ENCODE measurements at regions of chr7 and their contacts with region 1.

Region 1: GRCh38 chr7:74656837-74657691 is 454 bp upstream of the GTF2I start:
- DNase-seq: peak; percentile 97
- ATAC-seq: peak; percentile 66
- H3K4me3 ChIP-seq: peak overlapping the region; percentile 71 to 90 (median 88)
- H3K4me3 Mint-ChIP-seq: peak overlapping the region; percentile 93
- H3K27ac ChIP-seq: peak overlapping the region; percentile 60 to 86
- H3K27ac Mint-ChIP-seq: peak overlapping the region; percentile 86
- H3K4me1 ChIP-seq: peaks cover 43 to 47% of the 10 kb centered on the region in 2 donors
- H3K4me1 Mint-ChIP-seq: peaks cover 46% of the 10 kb centered on the region
- H3K27me3 ChIP-seq: no peaks in the 10 kb centered on the region
- H3K27me3 Mint-ChIP-seq: no peaks in the 10 kb centered on the region
- CTCF ChIP-seq: no peak

Region 2: GRCh38 chr7:74023037-74023436 is 634.0 kb before region 1 on chr7:
- CTCF ChIA-PET with region 1: no interaction called
- POLR2A ChIA-PET with region 1: no interaction called
- intact Hi-C with region 1: no loop called
- DNase-seq: no peak
- ATAC-seq: no peak
- H3K4me3 ChIP-seq: no peak overlapping the region
- H3K4me3 Mint-ChIP-seq: no peak overlapping the region
- H3K27ac ChIP-seq: no peak overlapping the region
- H3K27ac Mint-ChIP-seq: no peak overlapping the region
- H3K4me1 ChIP-seq: peaks cover 3 to 5% of the 10 kb centered on the region in 2 donors
- H3K4me1 Mint-ChIP-seq: peaks cover 3% of the 10 kb centered on the region
- H3K27me3 ChIP-seq: peaks cover 0 to 32% (median 10%) of the 10 kb centered on the region in 4 experiments
- H3K27me3 Mint-ChIP-seq: peaks cover 28% of the 10 kb centered on the region
- CTCF ChIP-seq: no peak

Region 3: GRCh38 chr7:74554178-74554577 is 102.9 kb before region 1 on chr7:
- CTCF ChIA-PET with region 1: no interaction called
- POLR2A ChIA-PET with region 1: no interaction called
- intact Hi-C with region 1: no loop called
- DNase-seq: no peak
- ATAC-seq: no peak
- H3K4me3 ChIP-seq: no peak overlapping the region
- H3K4me3 Mint-ChIP-seq: no peak overlapping the region
- H3K27ac ChIP-seq: no peak overlapping the region
- H3K27ac Mint-ChIP-seq: no peak overlapping the region
- H3K4me1 ChIP-seq: peaks cover 0 to 8% of the 10 kb centered on the region in 2 donors
- H3K4me1 Mint-ChIP-seq: peaks cover 7% of the 10 kb centered on the region
- H3K27me3 ChIP-seq: no peaks in the 10 kb centered on the region
- H3K27me3 Mint-ChIP-seq: no peaks in the 10 kb centered on the region
- CTCF ChIP-seq: no peak

Region 4: GRCh38 chr7:74587435-74588126 is 69.5 kb before region 1 on chr7:
- CTCF ChIA-PET with region 1: no interaction called
- POLR2A ChIA-PET with region 1: no interaction called
- intact Hi-C with region 1: no loop called
- DNase-seq: no peak
- ATAC-seq: peak; percentile 85
- H3K4me3 ChIP-seq: peak overlapping the region in 1 of 5 experiments; percentile 5
- H3K4me3 Mint-ChIP-seq: peak overlapping the region; percentile 62
- H3K27ac ChIP-seq: no peak overlapping the region
- H3K27ac Mint-ChIP-seq: peak overlapping the region; percentile 66
- H3K4me1 ChIP-seq: peaks cover 6 to 11% of the 10 kb centered on the region in 2 donors
- H3K4me1 Mint-ChIP-seq: peaks cover 14% of the 10 kb centered on the region
- H3K27me3 ChIP-seq: no peaks in the 10 kb centered on the region
- H3K27me3 Mint-ChIP-seq: no peaks in the 10 kb centered on the region
- CTCF ChIP-seq: no peak

Region 5: GRCh38 chr7:74617180-74617744 is 39.8 kb before region 1 on chr7:
- CTCF ChIA-PET with region 1: no interaction called
- POLR2A ChIA-PET with region 1: interaction called, 3 read pairs
- intact Hi-C with region 1: loop called (anchors 2 kb)
- DNase-seq: peak; percentile 56
- ATAC-seq: peak; percentile 68
- H3K4me3 ChIP-seq: peak overlapping the region in 3 of 5 experiments; percentile 1 to 30 (median 27)
- H3K4me3 Mint-ChIP-seq: peak overlapping the region; percentile 76
- H3K27ac ChIP-seq: peak overlapping the region; percentile 41 to 66
- H3K27ac Mint-ChIP-seq: peak overlapping the region; percentile 86
- H3K4me1 ChIP-seq: peaks cover 23 to 27% of the 10 kb centered on the region in 2 donors
- H3K4me1 Mint-ChIP-seq: peaks cover 32% of the 10 kb centered on the region
- H3K27me3 ChIP-seq: no peaks in the 10 kb centered on the region
- H3K27me3 Mint-ChIP-seq: no peaks in the 10 kb centered on the region
- CTCF ChIP-seq: no peak

Region 6: GRCh38 chr7:74633451-74633921 is 23.6 kb before region 1 on chr7:
- CTCF ChIA-PET with region 1: no interaction called
- POLR2A ChIA-PET with region 1: interaction called, 13 read pairs
- intact Hi-C with region 1: no loop called
- DNase-seq: no peak
- ATAC-seq: no peak
- H3K4me3 ChIP-seq: no peak overlapping the region
- H3K4me3 Mint-ChIP-seq: no peak overlapping the region
- H3K27ac ChIP-seq: no peak overlapping the region
- H3K27ac Mint-ChIP-seq: no peak overlapping the region
- H3K4me1 ChIP-seq: no peaks in the 10 kb centered on the region
- H3K4me1 Mint-ChIP-seq: no peaks in the 10 kb centered on the region
- H3K27me3 ChIP-seq: no peaks in the 10 kb centered on the region
- H3K27me3 Mint-ChIP-seq: no peaks in the 10 kb centered on the region
- CTCF ChIP-seq: no peak